Psoas muscle (tissue), 8 donors: ENCODE measurements at regions of chr7 and their contacts with region 1.

Region 1: DNA sequence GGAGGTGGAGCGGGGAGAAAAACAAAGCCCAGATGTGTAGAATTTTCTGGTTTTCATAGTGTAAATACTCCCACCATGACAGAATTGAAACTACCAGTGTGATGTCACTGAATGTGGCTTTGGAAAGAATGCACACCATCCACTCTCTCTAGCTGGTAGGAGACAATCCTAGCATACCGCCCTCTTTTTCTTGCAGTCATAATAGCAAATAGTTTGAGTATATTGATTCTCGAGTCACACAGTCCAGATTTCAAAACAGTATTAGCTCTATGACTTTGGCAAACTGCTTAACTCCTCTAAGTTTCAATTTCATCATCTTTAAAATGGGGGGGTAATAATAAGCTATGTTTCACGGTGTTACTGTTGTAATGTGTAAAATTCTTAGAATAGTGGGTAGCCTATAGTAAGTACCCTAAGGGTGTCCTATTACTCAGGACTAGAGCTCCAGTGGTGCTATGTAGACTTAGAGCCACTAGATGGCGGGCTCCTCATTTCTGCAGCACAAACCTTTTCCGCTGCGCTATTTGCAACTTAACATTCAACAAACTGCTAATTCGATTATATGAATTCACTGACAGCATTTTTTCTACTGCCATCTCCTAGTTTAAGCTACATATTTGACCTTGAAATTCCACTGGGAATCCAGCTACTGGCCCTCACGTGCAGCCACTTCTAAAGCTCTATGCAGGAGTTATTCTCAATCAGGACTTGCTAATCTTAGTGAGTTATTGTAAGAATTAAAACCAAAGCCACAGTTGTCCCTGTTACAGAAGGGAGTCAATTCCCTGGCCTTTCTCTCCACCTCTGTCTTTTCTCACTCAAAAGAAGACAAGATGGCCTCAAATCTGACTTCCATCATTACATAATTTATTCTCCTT is 18.7 kb downstream of the TAS2R40 start:
- DNase-seq: peak in 1 of 2 donors; percentile 33
- ATAC-seq: peak; percentile 78 to 94 (median 87)
- H3K4me3 ChIP-seq: no peak overlapping the region
- H3K27ac ChIP-seq: no peak overlapping the region
- H3K4me1 ChIP-seq: no peaks in the 10 kb centered on the region
- H3K27me3 ChIP-seq: no peaks in the 10 kb centered on the region
- CTCF ChIP-seq: peak; percentile 95

Region 2: DNA sequence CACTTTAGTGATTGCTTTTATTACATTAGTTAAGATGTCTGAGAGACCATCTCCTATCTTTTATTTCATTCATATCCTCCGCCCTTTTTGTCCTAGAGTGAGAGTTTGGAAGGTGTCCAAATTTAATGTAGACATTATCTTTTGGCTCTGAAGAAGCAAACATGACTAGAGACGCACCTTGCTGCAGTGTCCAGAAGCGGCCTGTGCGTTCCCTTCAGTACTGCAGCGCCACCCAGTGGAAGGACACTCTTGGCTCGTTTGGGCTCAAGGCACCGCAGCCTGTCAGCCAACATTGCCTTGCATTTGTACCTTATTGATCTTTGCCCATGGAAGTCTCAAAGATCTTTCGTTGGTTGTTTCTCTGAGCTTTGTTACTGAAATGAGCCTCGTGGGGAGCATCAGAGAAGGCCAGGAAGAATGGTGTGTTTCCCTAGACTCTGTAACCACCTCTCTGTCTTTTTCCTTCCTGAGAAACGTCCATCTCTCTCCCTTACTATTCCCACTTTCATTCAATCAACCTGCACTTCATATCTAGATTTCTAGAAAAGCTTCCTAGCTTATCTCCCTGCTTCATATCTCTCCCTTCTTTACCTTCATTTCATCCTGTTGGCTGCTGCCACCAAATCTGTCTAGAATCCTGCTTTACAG is 65.0 kb after region 1 on chr7:
- intact Hi-C with region 1: loop called (anchors 2 to 5 kb)
- DNase-seq: peak; percentile 68 to 75
- ATAC-seq: peak; percentile 67 to 88 (median 77)
- H3K4me3 ChIP-seq: no peak overlapping the region
- H3K27ac ChIP-seq: no peak overlapping the region
- H3K4me1 ChIP-seq: peaks cover 8% of the 10 kb centered on the region
- H3K27me3 ChIP-seq: no peaks in the 10 kb centered on the region
- CTCF ChIP-seq: peak; percentile 72

Region 3: DNA sequence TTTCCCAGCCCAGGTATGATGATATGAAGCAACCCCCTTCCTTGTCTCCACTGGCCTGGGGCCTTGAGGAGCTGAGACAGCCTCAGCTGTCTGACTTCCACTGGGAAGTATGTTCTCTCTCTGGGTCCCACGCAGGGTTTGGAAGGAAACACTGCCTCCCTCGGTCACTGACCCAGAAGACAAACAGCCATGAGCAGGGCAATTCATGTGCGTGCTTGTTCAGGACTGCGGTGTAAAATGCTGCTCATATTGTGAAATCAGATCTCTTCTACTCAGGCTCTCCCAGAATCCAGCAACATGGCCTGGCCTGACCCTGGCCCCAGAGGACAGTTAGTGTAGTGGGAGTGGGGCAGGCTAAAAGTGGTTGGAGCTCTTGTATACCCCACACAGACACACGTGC is 78.1 kb after region 1 on chr7:
- intact Hi-C with region 1: loop called in 1 of 2 experiments (anchors 5 kb)
- DNase-seq: peak; percentile 42 to 81
- ATAC-seq: peak; percentile 74 to 80 (median 78)
- H3K4me3 ChIP-seq: peak overlapping the region; percentile 75
- H3K27ac ChIP-seq: peak overlapping the region; percentile 89
- H3K4me1 ChIP-seq: peaks cover 44% of the 10 kb centered on the region
- H3K27me3 ChIP-seq: no peaks in the 10 kb centered on the region
- CTCF ChIP-seq: no peak

Region 4: GRCh38 chr7:143408686-143409561 is 168.4 kb after region 1 on chr7 and contains the start of gene EPHA1:
- intact Hi-C with region 1: loop called in 1 of 2 experiments (anchors 2 kb)
- DNase-seq: no peak
- ATAC-seq: no peak
- H3K4me3 ChIP-seq: no peak within 1 kb of the TSS
- H3K27ac ChIP-seq: no peak within 1 kb of the TSS
- H3K4me1 ChIP-seq: no peaks in the 10 kb centered on the region
- H3K27me3 ChIP-seq: no peaks in the 10 kb centered on the region
- CTCF ChIP-seq: no peak
- total RNA-seq, gene EPHA1: 0.28 to 0.38 TPM in 2 of 4 donors, not detected in the others

Region 5: GRCh38 chr7:143416565-143417149 is 176.1 kb after region 1 on chr7:
- intact Hi-C with region 1: loop called (anchors 1 to 2 kb)
- DNase-seq: no peak
- ATAC-seq: peak in 3 of 4 donors; percentile 59 to 76 (median 60)
- H3K4me3 ChIP-seq: no peak overlapping the region
- H3K27ac ChIP-seq: no peak overlapping the region
- H3K4me1 ChIP-seq: no peaks in the 10 kb centered on the region
- H3K27me3 ChIP-seq: peaks cover 0 to 6% (median 0%) of the 10 kb centered on the region in 3 donors
- CTCF ChIP-seq: peak; percentile 88